CD4-positive, alpha-beta memory T cell (primary cell): ENCODE measurements at regions of chr15 and their contacts with region 1.

Region 1: GRCh38 chr15:65384895-65385858 is 7.4 kb upstream of the IGDCC3 start:
- DNase-seq: peak; percentile 78 to 82 (median 78)
- H3K4me3 ChIP-seq: peak overlapping the region; percentile 76 to 78
- H3K4me3 Mint-ChIP-seq: peak overlapping the region; percentile 88 to 97 (median 91)
- H3K27ac ChIP-seq: peak overlapping the region; percentile 46
- H3K27ac Mint-ChIP-seq: peak overlapping the region in 5 of 7 donors; percentile 66 to 90 (median 78)
- H3K4me1 ChIP-seq: peaks cover 11% of the 10 kb centered on the region
- H3K4me1 Mint-ChIP-seq: peaks cover 2 to 17% (median 5%) of the 10 kb centered on the region in 4 donors
- H3K27me3 ChIP-seq: no peaks in the 10 kb centered on the region
- H3K27me3 Mint-ChIP-seq: peaks cover 5 to 10% of the 10 kb centered on the region in 2 donors

Region 2: DNA sequence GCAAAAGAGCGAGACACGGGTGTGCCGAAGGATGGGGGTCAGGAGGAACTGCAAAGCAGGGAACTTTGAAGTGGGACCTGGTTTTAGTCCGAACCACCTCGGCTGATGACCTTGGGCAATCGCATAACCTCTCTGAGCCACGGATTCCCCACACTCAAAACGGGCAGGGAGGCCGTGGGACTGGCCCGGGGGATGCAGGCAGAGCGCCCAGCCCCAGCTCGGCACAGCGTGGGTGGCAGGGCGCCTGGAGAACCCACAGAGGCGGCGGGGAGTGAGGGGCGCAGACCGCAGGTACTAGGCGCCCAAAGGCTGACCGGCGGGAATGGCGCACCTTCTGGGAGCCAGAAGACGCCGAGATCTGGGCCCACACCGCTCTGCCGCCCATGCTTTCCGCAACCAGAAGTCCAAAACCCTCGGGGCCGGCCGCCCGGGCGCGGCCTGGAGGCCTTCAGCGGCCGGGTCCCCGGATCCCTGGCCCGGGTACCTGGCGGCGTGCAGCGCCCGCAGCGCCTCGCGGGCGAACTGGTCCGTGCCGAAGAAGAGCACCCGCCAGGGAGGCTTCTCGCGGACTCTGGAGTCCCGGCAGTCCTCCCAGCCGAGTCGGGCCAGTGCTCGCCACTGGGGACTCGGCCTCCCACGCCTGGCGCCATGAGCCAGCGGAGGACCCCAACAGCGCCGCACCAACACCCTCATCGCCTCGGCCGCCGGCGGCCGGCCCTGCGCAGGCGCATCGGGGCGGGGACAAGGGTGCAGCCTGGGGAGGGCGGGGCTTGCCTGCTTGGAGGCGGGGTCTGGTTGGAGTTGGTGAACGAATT is 356.0 kb before region 1 on chr15 and contains the start of gene MTFMT:
- CTCF ChIA-PET with region 1: no interaction called
- POLR2A ChIA-PET with region 1: no interaction called
- intact Hi-C with region 1: loop called (anchors 1 kb)
- DNase-seq: peak; percentile 83 to 90 (median 85)
- H3K4me3 ChIP-seq: peak within 1 kb of the TSS; percentile 71 to 84
- H3K4me3 Mint-ChIP-seq: peak within 1 kb of the TSS; percentile 87 to 95 (median 94)
- H3K27ac ChIP-seq: peak within 1 kb of the TSS; percentile 70
- H3K27ac Mint-ChIP-seq: peak within 1 kb of the TSS; percentile 43 to 97 (median 84)
- H3K4me1 ChIP-seq: peaks cover 17% of the 10 kb centered on the region
- H3K4me1 Mint-ChIP-seq: peaks cover 11 to 24% (median 20%) of the 10 kb centered on the region in 4 donors
- H3K27me3 ChIP-seq: no peaks in the 10 kb centered on the region
- H3K27me3 Mint-ChIP-seq: peaks cover 3 to 16% of the 10 kb centered on the region in 2 donors
- total RNA-seq, gene MTFMT: 15.2 to 18.3 TPM

Region 3: GRCh38 chr15:65318870-65319356 is 66.3 kb before region 1 on chr15:
- CTCF ChIA-PET with region 1: interaction called, 145 read pairs
- POLR2A ChIA-PET with region 1: interaction called, 4 read pairs
- intact Hi-C with region 1: loop called (anchors 1 kb)
- DNase-seq: peak; percentile 72 to 75 (median 74)
- H3K4me3 ChIP-seq: no peak overlapping the region
- H3K4me3 Mint-ChIP-seq: no peak overlapping the region
- H3K27ac ChIP-seq: no peak overlapping the region
- H3K27ac Mint-ChIP-seq: peak overlapping the region in 2 of 7 donors; percentile 11 to 60
- H3K4me1 ChIP-seq: no peaks in the 10 kb centered on the region
- H3K4me1 Mint-ChIP-seq: no peaks in the 10 kb centered on the region
- H3K27me3 ChIP-seq: no peaks in the 10 kb centered on the region
- H3K27me3 Mint-ChIP-seq: peaks cover 7 to 12% of the 10 kb centered on the region in 2 donors

Region 4: GRCh38 chr15:65374821-65375401 is 10.3 kb before region 1 on chr15:
- CTCF ChIA-PET with region 1: interaction called, 31 read pairs
- POLR2A ChIA-PET with region 1: no interaction called
- intact Hi-C with region 1: no loop called
- DNase-seq: no peak
- H3K4me3 ChIP-seq: no peak overlapping the region
- H3K4me3 Mint-ChIP-seq: no peak overlapping the region
- H3K27ac ChIP-seq: no peak overlapping the region
- H3K27ac Mint-ChIP-seq: no peak overlapping the region
- H3K4me1 ChIP-seq: peaks cover 6% of the 10 kb centered on the region
- H3K4me1 Mint-ChIP-seq: peaks cover 8 to 24% (median 15%) of the 10 kb centered on the region in 4 donors
- H3K27me3 ChIP-seq: peaks cover 27% of the 10 kb centered on the region
- H3K27me3 Mint-ChIP-seq: peaks cover 41 to 44% of the 10 kb centered on the region in 2 donors

Region 5: DNA sequence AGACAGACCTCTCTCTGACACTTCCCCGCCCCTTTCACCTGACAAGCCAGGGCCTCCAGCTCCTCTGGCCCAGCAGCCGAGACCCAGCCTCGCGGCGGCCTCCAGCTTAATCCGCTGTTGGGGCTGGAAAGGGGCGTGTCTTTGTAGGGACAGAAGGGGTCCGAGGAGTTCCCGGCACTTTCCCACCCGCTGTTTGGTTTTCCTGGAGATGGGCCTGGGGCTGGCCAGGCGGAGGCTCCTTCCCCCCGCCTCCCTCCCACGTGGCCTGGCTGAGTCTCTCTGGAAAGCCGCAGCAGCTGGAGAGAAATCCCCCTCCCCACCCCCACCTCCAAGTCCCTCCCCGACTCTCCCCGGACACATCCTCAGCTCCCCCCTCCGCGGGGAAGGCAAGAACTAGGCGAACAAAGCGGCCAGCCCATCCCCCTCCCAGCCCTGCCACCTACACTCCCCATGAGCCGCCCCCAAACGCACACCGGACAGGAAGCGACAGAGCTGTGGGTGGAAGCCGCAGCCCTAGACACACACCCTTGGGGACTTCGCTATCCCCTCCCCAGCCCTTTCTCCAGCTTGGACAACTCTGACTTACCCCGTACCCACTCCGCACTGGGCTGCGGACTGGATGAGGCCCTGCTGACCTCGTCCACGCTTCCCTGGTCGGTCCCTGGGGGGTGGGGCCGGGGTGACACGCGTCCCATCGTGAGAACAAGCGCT is 36.3 kb after region 1 on chr15:
- CTCF ChIA-PET with region 1: interaction called, 10 read pairs
- POLR2A ChIA-PET with region 1: no interaction called
- intact Hi-C with region 1: no loop called
- DNase-seq: no peak
- H3K4me3 ChIP-seq: no peak overlapping the region
- H3K4me3 Mint-ChIP-seq: peak overlapping the region in 6 of 8 donors; percentile 73 to 87 (median 82)
- H3K27ac ChIP-seq: no peak overlapping the region
- H3K27ac Mint-ChIP-seq: no peak overlapping the region
- H3K4me1 ChIP-seq: peaks cover 9% of the 10 kb centered on the region
- H3K4me1 Mint-ChIP-seq: peaks cover 11 to 25% (median 16%) of the 10 kb centered on the region in 4 donors
- H3K27me3 ChIP-seq: peaks cover 12% of the 10 kb centered on the region
- H3K27me3 Mint-ChIP-seq: peaks cover 46 to 58% of the 10 kb centered on the region in 2 donors

Region 6: DNA sequence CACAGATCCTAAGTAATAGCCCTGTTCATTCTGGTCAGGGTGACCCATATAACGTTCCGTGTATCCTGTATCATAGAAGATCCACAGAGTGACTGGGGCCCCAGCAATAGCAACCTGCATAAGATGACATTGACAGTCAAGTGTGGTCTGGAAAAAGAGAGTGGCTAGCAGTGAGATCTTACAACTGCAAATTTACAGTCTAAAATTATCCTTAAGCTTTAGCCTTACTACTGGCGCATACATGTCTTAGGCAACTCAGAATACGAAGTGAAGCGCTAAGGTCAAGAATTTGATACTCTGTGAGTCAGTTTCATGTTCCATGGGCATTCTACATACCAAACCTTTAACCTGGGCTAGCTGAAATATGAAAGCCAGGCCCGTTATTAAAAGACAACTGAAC is 66.8 kb after region 1 on chr15:
- CTCF ChIA-PET with region 1: no interaction called
- POLR2A ChIA-PET with region 1: no interaction called
- intact Hi-C with region 1: no loop called
- DNase-seq: no peak
- H3K4me3 ChIP-seq: no peak overlapping the region
- H3K4me3 Mint-ChIP-seq: no peak overlapping the region
- H3K27ac ChIP-seq: no peak overlapping the region
- H3K27ac Mint-ChIP-seq: peak overlapping the region in 2 of 7 donors; percentile 15 to 47
- H3K4me1 ChIP-seq: no peaks in the 10 kb centered on the region
- H3K4me1 Mint-ChIP-seq: peaks cover 0 to 3% (median 0%) of the 10 kb centered on the region in 4 donors
- H3K27me3 ChIP-seq: no peaks in the 10 kb centered on the region
- H3K27me3 Mint-ChIP-seq: no peaks in the 10 kb centered on the region

Region 7: DNA sequence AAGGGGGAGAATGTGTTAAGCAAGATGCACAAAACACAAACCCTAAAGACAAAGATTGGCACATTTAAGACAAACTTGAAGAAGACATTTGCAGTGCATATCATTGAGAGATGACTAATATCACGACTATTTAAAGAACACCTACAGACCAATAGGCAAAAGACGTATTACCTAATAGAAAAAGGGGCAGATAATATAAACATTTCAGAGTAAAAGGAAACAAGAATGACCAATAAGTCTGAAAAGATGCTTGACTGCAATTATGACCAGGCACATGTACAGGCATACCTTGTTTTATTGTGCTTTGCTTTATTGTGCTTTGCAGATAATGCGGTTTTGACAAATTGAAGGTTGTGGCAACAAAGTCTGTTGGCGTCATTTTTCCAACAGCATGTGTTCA is 150.0 kb after region 1 on chr15:
- CTCF ChIA-PET with region 1: no interaction called
- POLR2A ChIA-PET with region 1: no interaction called
- intact Hi-C with region 1: no loop called
- DNase-seq: no peak
- H3K4me3 ChIP-seq: no peak overlapping the region
- H3K4me3 Mint-ChIP-seq: no peak overlapping the region
- H3K27ac ChIP-seq: no peak overlapping the region
- H3K27ac Mint-ChIP-seq: no peak overlapping the region
- H3K4me1 ChIP-seq: peaks cover 19% of the 10 kb centered on the region
- H3K4me1 Mint-ChIP-seq: peaks cover 30 to 42% (median 31%) of the 10 kb centered on the region in 4 donors
- H3K27me3 ChIP-seq: no peaks in the 10 kb centered on the region
- H3K27me3 Mint-ChIP-seq: no peaks in the 10 kb centered on the region